Ovary (tissue), 10 donors: ENCODE measurements at regions of chr3 and their contacts with region 1.

Region 1: DNA sequence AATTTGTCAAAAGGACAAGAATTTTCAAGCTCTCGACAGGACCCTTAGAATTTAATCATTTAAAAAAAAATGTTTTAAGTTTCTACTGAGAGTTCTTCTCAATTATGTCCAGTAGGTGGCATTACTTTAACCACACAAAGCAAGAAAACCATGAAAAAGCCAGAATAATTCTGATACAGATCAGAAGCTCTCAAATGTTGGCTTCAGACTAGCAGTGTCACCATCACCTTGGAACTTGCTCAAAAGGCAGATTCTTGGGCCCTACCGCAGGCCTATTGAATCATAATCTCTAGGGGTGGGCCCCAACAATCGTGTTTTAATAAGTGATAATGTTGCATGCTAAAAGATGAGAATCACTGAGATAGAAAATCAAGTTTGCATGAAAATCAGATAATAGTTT is 99.5 kb upstream of the KCNMB2 start:
- DNase-seq: no peak
- H3K4me3 ChIP-seq: no peak overlapping the region
- H3K27ac ChIP-seq: no peak overlapping the region
- H3K4me1 ChIP-seq: no peaks in the 10 kb centered on the region
- H3K27me3 ChIP-seq: no peaks in the 10 kb centered on the region
- CTCF ChIP-seq: peak in 2 of 3 donors; percentile 21
- EP300 ChIP-seq: no peak
- POLR2A ChIP-seq: no peak

Region 2: GRCh38 chr3:178405531-178405930 is 31.2 kb before region 1 on chr3:
- intact Hi-C with region 1: no loop called
- DNase-seq: no peak
- H3K4me3 ChIP-seq: no peak overlapping the region
- H3K27ac ChIP-seq: peak overlapping the region in 1 of 2 donors; percentile 6
- H3K4me1 ChIP-seq: peaks cover 2% of the 10 kb centered on the region
- H3K27me3 ChIP-seq: no peaks in the 10 kb centered on the region
- CTCF ChIP-seq: no peak
- EP300 ChIP-seq: no peak
- POLR2A ChIP-seq: no peak

Region 3: DNA sequence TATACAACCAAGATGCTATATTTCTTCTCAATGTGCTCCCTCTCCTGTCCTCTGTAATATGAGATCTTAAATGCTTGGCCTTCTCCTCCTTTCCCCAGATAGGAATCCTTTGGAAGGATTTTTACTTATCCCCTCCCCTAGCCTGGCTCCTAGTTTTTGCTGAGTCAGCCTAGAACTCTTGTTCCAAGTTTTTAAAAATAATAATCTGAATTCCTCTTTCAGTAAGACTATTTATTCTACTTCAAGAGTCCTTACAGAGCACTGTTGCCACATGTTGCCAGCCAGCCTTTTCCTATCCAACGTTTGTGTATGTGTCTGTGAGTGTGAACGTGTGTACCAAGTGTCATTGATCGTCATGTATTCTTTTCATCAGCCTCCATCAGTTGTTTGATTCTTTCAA is 88.5 kb after region 1 on chr3:
- intact Hi-C with region 1: no loop called
- DNase-seq: no peak
- H3K4me3 ChIP-seq: no peak overlapping the region
- H3K27ac ChIP-seq: no peak overlapping the region
- H3K4me1 ChIP-seq: no peaks in the 10 kb centered on the region
- H3K27me3 ChIP-seq: no peaks in the 10 kb centered on the region
- CTCF ChIP-seq: no peak
- EP300 ChIP-seq: no peak
- POLR2A ChIP-seq: no peak

Region 4: GRCh38 chr3:178966299-178967176 is 529.8 kb after region 1 on chr3:
- intact Hi-C with region 1: loop called (anchors 5 to 10 kb)
- DNase-seq: peak in 4 of 5 donors; percentile 11 to 61 (median 32)
- H3K4me3 ChIP-seq: no peak overlapping the region
- H3K27ac ChIP-seq: no peak overlapping the region
- H3K4me1 ChIP-seq: peaks cover 5% of the 10 kb centered on the region
- H3K27me3 ChIP-seq: no peaks in the 10 kb centered on the region
- CTCF ChIP-seq: peak in 1 of 3 donors; percentile 38
- EP300 ChIP-seq: no peak
- POLR2A ChIP-seq: no peak